Activated naive CD4-positive, alpha-beta T cell treated with anti-CD3 and anti-CD28 coated beads for 36 hours (primary cell): ENCODE measurements at regions of chr7 and their contacts with region 1.

Region 1: DNA sequence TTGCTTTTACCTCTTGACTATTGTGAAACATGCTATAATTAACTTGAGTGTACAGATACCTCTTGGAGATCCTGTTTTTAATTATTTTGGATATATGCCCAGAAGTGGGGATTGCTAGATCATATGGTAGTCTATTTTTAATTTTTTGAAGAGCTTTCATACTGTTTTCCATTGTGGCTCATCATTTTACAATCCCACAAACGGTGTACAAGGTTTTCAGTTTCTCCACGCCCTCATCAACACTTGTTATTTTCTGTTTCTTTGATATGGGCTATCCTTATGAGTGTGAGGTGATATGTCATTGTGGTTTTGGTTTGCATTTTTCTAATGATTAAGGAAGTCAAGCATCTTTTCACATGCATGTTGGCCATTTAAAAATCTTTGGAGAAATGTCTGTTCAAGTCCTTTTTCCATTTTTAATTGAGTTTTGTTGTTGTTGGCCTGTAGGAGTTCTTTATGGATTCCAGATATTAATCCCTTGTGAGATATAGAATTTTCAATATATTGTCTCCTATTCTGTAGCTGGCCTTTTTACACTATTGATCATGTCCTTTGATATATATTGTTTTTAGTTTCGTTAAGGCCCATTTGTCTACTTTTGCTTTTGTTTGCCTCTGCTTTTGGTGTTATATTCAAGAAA is 7.5 kb downstream of the AGK start:
- DNase-seq: peak; percentile 29
- H3K4me3 Mint-ChIP-seq: no peak overlapping the region
- H3K27ac Mint-ChIP-seq: peak overlapping the region; percentile 26
- H3K4me1 Mint-ChIP-seq: peaks cover 65% of the 10 kb centered on the region
- H3K27me3 Mint-ChIP-seq: no peaks in the 10 kb centered on the region

Region 2: GRCh38 chr7:141575164-141575563 is 16.5 kb after region 1 on chr7:
- CTCF ChIA-PET with region 1: no interaction called
- intact Hi-C with region 1: no loop called
- DNase-seq: no peak
- H3K4me3 Mint-ChIP-seq: no peak overlapping the region
- H3K27ac Mint-ChIP-seq: no peak overlapping the region
- H3K4me1 Mint-ChIP-seq: peaks cover 17% of the 10 kb centered on the region
- H3K27me3 Mint-ChIP-seq: no peaks in the 10 kb centered on the region

Region 3: GRCh38 chr7:141585592-141586510 is 27.2 kb after region 1 on chr7:
- CTCF ChIA-PET with region 1: no interaction called
- intact Hi-C with region 1: loop called (anchors 1 kb)
- DNase-seq: peak; percentile 50
- H3K4me3 Mint-ChIP-seq: no peak overlapping the region
- H3K27ac Mint-ChIP-seq: peak overlapping the region; percentile 39
- H3K4me1 Mint-ChIP-seq: peaks cover 45% of the 10 kb centered on the region
- H3K27me3 Mint-ChIP-seq: no peaks in the 10 kb centered on the region

Region 4: GRCh38 chr7:141674702-141675101 is 116.0 kb after region 1 on chr7:
- CTCF ChIA-PET with region 1: no interaction called
- intact Hi-C with region 1: loop called (anchors 1 kb)
- DNase-seq: peak; percentile 15
- H3K4me3 Mint-ChIP-seq: no peak overlapping the region
- H3K27ac Mint-ChIP-seq: no peak overlapping the region
- H3K4me1 Mint-ChIP-seq: peaks cover 17% of the 10 kb centered on the region
- H3K27me3 Mint-ChIP-seq: no peaks in the 10 kb centered on the region